Panc1 (cell line): ENCODE measurements at regions of chr9 and their contacts with region 1.

Region 1: DNA sequence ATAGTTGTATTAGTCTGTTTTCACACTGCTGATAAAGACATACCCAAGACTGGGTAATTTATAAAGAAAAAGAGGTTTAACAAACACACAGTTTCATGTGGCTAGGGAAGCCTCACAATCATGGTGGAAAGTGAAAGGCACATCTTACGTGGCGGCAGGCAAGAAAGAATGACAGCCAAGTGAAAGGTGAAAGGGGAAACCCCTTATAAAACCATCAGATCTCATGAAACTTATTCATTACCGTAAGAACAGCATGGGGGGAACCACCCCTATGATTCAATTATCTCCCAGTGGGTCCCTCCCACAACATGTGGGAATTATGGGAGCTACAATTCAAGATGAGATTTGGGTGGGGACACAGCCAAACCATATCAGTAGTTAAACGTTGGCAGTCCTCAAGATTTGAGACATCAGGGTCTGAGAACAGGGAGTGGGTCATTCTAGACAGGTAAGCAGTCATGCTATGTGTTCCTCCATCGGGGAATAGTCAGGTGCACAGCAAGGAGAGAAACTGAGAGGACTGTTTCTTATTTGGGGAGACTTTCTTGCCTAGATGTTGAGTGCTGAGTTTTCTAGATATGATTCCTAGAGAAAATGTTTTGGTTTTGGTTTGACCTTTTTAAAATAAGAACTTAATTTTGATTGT is 45.8 kb upstream of the ENTREP1 start:
- DNase-seq: no peak
- ATAC-seq: no peak
- H3K4me3 ChIP-seq: no peak overlapping the region
- H3K27ac ChIP-seq: no peak overlapping the region
- H3K4me1 ChIP-seq: no peaks in the 10 kb centered on the region
- H3K27me3 ChIP-seq: no peaks in the 10 kb centered on the region
- CTCF ChIP-seq: no peak

Region 2: GRCh38 chr9:69339620-69340019 is 60.4 kb after region 1 on chr9:
- CTCF ChIA-PET with region 1: no interaction called
- POLR2A ChIA-PET with region 1: no interaction called
- in situ Hi-C with region 1: no loop called
- intact Hi-C with region 1: loop called (anchors 10 kb)
- DNase-seq: no peak
- ATAC-seq: no peak
- H3K4me3 ChIP-seq: no peak overlapping the region
- H3K27ac ChIP-seq: no peak overlapping the region
- H3K4me1 ChIP-seq: no peaks in the 10 kb centered on the region
- H3K27me3 ChIP-seq: no peaks in the 10 kb centered on the region
- CTCF ChIP-seq: no peak

Region 3: DNA sequence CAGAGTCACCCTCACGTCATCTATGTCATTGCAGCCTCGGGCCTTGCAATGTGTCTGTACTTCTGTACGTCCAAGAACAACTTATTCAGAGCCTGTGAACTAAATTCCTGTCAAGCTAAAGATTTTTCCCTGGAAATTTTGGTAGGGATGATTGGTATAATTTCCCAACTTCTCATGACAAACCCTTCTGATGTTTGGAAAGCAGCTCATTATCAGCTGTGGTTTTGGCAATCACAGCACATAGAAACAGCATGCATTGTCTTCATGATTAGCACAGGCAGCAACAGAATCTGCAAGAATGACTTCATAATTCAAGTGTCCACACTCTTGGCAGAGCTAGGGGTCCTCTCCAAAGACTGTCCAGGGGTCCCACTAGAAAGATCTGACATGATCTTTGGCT is 343.5 kb after region 1 on chr9:
- CTCF ChIA-PET with region 1: no interaction called
- POLR2A ChIA-PET with region 1: no interaction called
- in situ Hi-C with region 1: no loop called
- intact Hi-C with region 1: no loop called
- DNase-seq: no peak
- ATAC-seq: no peak
- H3K4me3 ChIP-seq: no peak overlapping the region
- H3K27ac ChIP-seq: no peak overlapping the region
- H3K4me1 ChIP-seq: no peaks in the 10 kb centered on the region
- H3K27me3 ChIP-seq: no peaks in the 10 kb centered on the region; the same call in 1 of the 2 replicates
- CTCF ChIP-seq: no peak